OCI-LY7 (cell line): ENCODE measurements at regions of chr11 and their contacts with region 1.

Region 1: GRCh38 chr11:87290304-87290922 is 252.7 kb downstream of the TMEM135 start:
- DNase-seq: peak; percentile 74
- H3K4me3 ChIP-seq: no peak overlapping the region
- H3K27ac ChIP-seq: no peak overlapping the region
- H3K4me1 ChIP-seq: peaks cover 26% of the 10 kb centered on the region
- CTCF ChIP-seq: peak; percentile 96

Region 2: GRCh38 chr11:86869966-86870570 is 420.3 kb before region 1 on chr11:
- CTCF ChIA-PET with region 1: no interaction called
- POLR2A ChIA-PET with region 1: no interaction called
- intact Hi-C with region 1: loop called (anchors 5 kb)
- DNase-seq: peak; percentile 53
- H3K4me3 ChIP-seq: no peak overlapping the region
- H3K27ac ChIP-seq: no peak overlapping the region
- H3K4me1 ChIP-seq: no peaks in the 10 kb centered on the region
- CTCF ChIP-seq: peak; percentile 87

Region 3: DNA sequence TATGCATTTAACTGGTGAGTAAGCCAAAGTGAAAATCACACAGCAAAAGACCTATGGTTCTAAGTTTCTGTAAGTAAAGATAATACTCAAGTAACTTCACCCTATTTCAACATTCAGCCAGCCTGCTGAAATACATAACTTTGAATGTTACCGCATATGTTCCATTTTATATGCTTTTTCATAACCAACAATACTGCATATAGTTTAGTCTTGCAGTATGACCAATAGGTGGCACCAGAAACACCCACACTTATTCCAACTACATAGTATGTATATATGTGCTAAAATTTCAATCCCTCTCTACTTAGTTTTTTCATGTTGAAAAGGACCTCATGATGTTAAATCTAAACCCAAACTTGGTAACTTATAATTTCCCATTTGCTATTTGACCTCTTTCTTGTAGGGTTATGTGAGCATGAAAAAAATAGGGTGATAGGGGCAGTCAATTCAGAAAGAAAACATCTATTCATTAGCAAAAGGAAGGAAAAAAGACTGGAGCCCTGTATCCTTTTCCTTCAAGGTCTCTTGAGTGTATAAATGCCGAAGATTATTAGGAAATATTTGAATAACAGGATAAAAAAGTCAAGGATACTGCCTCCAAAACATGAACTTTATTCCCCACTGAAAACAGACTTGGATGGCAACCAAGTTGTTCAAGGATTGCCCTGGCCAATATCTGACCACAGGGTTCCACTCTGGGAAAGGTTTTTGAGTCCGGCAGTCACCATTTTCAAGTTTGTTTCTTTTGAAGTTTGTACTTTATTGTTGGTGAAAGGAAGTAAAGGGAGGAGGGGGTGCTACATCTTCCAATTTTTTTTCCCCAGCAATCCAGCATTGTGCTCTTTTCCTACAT is 311.4 kb before region 1 on chr11:
- CTCF ChIA-PET with region 1: no interaction called
- POLR2A ChIA-PET with region 1: interaction called, 3 read pairs
- intact Hi-C with region 1: loop called (anchors 2 kb)
- DNase-seq: peak; percentile 54
- H3K4me3 ChIP-seq: no peak overlapping the region
- H3K27ac ChIP-seq: no peak overlapping the region
- H3K4me1 ChIP-seq: peaks cover 3% of the 10 kb centered on the region
- CTCF ChIP-seq: peak; percentile 95

Region 4: GRCh38 chr11:87037450-87038234 is 252.8 kb before region 1 on chr11 and contains the start of gene TMEM135:
- CTCF ChIA-PET with region 1: no interaction called
- POLR2A ChIA-PET with region 1: interaction called, 5 read pairs
- intact Hi-C with region 1: loop called (anchors 1 kb)
- DNase-seq: peak; percentile 97
- H3K4me3 ChIP-seq: peak within 1 kb of the TSS; percentile 79
- H3K27ac ChIP-seq: peak within 1 kb of the TSS; percentile 54
- H3K4me1 ChIP-seq: peaks cover 27% of the 10 kb centered on the region
- CTCF ChIP-seq: peak; percentile 23; the same call in 1 of the 2 replicates
- total RNA-seq, gene TMEM135: 9.4 and 14.5 TPM in 2 replicates

Region 5: DNA sequence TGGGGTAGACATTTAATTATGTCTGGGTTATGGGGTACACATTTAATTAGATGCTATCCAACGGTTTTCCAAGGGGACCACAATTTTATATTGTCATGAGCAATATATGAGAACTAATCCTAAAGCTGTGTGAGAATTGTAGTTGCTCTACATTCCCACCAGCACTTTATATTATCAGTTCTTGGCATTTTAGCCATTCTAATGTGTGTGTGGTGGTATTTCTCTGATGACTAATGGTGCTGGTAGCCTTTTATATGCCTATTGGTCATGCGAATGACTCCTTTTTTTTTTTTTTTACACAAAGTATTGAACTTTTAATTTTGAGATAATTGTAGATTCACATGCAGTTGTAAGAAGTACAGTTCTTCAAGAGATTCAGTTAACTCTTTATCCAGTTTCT is 226.4 kb before region 1 on chr11:
- CTCF ChIA-PET with region 1: no interaction called
- POLR2A ChIA-PET with region 1: no interaction called
- intact Hi-C with region 1: no loop called
- DNase-seq: no peak
- H3K4me3 ChIP-seq: no peak overlapping the region
- H3K27ac ChIP-seq: no peak overlapping the region
- H3K4me1 ChIP-seq: no peaks in the 10 kb centered on the region
- CTCF ChIP-seq: no peak

Region 6: DNA sequence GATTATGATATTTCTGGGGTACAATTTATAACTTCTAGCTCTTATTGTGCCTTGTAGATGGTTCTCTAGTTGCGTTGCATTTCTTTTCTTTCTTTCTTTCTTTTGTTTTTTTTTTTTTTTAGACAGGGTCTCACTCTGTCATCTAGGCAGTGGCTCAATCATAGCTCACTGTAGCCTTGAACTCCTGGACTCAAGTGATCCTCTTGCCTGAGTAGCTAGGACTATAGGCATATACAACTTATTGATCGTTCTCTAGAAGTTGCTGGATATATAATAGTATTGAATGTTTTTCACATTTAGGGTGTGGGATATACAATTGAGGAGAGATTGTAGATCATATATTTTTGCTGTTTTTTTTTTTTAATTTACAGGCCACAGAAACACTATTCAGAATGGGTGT is 133.4 kb before region 1 on chr11:
- CTCF ChIA-PET with region 1: no interaction called
- POLR2A ChIA-PET with region 1: no interaction called
- intact Hi-C with region 1: no loop called
- DNase-seq: no peak
- H3K4me3 ChIP-seq: no peak overlapping the region
- H3K27ac ChIP-seq: no peak overlapping the region
- H3K4me1 ChIP-seq: no peaks in the 10 kb centered on the region
- CTCF ChIP-seq: no peak

Region 7: GRCh38 chr11:87384078-87384729 is 93.8 kb after region 1 on chr11:
- CTCF ChIA-PET with region 1: no interaction called
- POLR2A ChIA-PET with region 1: no interaction called
- intact Hi-C with region 1: no loop called
- DNase-seq: no peak
- H3K4me3 ChIP-seq: no peak overlapping the region
- H3K27ac ChIP-seq: no peak overlapping the region
- H3K4me1 ChIP-seq: no peaks in the 10 kb centered on the region
- CTCF ChIP-seq: no peak

Region 8: DNA sequence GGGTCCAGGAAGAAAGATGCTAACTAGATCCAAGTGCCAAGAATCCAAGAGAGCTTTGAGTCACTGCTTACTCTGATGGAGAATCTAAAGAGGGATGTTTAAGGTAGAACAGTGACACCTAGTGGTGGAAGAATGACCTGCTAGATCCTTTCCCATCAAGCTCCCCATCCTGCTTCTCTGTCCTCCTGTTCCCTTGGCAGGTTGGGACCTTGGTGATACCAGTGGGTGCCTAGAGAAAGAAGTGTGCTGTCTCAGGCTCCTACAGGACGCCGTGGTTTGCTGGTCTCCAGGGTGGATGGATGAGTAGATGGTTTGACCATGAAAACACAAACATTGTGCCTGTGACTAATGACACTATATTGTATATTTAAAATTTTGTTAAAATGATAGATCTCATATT is 131.0 kb after region 1 on chr11:
- CTCF ChIA-PET with region 1: no interaction called
- POLR2A ChIA-PET with region 1: no interaction called
- intact Hi-C with region 1: loop called (anchors 1 kb)
- DNase-seq: peak; percentile 82
- H3K4me3 ChIP-seq: no peak overlapping the region
- H3K27ac ChIP-seq: no peak overlapping the region
- H3K4me1 ChIP-seq: peaks cover 33% of the 10 kb centered on the region
- CTCF ChIP-seq: peak; percentile 83